Left cardiac atrium (tissue), 4 donors: ENCODE measurements at regions of chr15 and their contacts with region 1.

Region 1: GRCh38 chr15:81184188-81184587 is 12.5 kb upstream of the IL16 start:
- DNase-seq: peak; percentile 46
- ATAC-seq: peak in 1 of 2 donors; percentile 37

Region 2: DNA sequence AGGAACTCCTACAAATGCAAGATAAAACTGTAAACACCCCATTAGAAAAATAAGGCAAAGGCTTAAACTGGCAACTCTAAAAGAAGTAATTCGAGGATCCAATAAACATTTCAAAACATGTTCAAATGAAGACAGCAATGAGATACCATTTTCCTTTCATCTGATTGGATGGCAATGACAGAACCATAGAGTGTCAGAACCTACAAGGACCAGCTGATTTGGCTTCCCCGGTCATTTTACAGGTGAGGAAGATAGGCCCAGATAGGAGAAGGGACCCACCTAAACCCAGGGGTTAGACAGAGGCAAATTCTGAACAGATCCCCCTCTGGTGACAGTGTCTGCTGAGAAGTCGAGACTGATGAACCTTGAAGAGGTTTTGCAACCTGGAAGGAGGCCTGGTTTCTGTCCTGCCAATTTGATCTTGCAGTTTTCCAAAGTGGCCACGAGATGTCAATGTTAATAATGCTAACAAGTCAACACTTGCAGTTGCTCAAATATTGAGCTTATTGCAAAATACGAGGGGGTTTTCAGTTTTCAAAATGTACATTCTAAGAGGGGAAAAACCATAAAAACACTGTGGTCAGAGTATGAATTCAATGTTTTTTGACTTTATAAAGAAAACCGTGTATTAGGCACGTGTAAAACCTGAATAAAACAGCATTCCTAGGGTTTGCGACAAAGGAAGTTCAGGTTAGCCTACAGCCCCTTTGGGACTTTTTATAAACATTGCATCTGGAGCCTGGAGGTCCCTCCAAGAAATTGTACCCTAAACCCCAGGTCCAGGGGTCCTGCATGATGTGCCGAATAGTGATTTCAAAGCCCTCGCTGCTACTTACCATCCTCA is 28.6 kb before region 1 on chr15:
- intact Hi-C with region 1: loop called in 1 of 2 experiments (anchors 2 kb)
- DNase-seq: no peak
- ATAC-seq: peak; percentile 35 to 56